GM12878 (cell line): ENCODE measurements at regions of chr5 and their contacts with region 1.

Region 1: GRCh38 chr5:134041570-134042411 is 37.0 kb upstream of the VDAC1 start:
- DNase-seq: peak; percentile 74
- ATAC-seq: peak; percentile 88
- H3K4me3 ChIP-seq: no peak overlapping the region
- H3K27ac ChIP-seq: peak overlapping the region; percentile 33; the same call in 1 of the 2 replicates
- H3K4me1 ChIP-seq: peaks cover 24% of the 10 kb centered on the region
- H3K27me3 ChIP-seq: no peaks in the 10 kb centered on the region
- CTCF ChIP-seq: no peak
- EP300 ChIP-seq: peak; percentile 73 to 90
- POLR2A ChIP-seq: no peak
- RAD21 ChIP-seq: 0 out of 2 replicates have a peak, but pooled peaks have one; percentile 6

Region 2: DNA sequence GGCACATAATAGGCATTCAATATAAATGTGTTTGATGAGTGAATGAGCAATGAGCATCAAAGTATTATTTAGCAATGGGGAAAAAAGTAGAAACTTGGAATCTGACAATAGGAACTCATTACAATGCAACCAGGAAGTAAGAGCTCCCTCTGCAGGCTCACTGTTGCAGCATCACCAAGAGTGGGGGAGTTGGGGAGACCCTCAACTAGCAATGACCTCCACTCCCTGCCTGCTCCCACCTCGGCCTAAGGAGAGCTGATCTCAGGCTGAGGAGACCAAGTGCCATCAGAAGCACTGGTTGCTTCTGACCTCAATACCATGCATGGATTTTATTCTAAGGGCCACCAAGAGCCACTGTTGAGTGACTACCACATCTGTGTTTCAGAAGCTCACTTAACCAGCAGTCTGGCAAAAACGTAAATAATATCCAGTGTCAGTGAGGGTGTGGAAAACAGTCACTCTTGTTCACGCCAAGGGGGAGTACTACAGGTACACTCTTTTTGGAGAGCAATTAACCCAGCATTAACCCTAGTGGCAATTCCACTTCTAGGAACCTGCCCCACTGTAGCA is 45.0 kb before region 1 on chr5:
- CTCF ChIA-PET with region 1: interaction called, 13 read pairs
- POLR2A ChIA-PET with region 1: interaction called, 4 read pairs
- RAD21 ChIA-PET with region 1: interaction called, 3 read pairs
- SMC1A ChIA-PET with region 1: interaction called, 4 read pairs
- in situ Hi-C with region 1: no loop called
- intact Hi-C with region 1: no loop called
- DNase-seq: no peak
- ATAC-seq: peak; percentile 53
- H3K4me3 ChIP-seq: peak overlapping the region; percentile 38; the same call in 1 of the 2 replicates
- H3K27ac ChIP-seq: no peak overlapping the region
- H3K4me1 ChIP-seq: peaks cover 25% of the 10 kb centered on the region
- H3K27me3 ChIP-seq: no peaks in the 10 kb centered on the region
- CTCF ChIP-seq: peak; percentile 67 to 72 (median 68)
- EP300 ChIP-seq: no peak
- POLR2A ChIP-seq: no peak
- RAD21 ChIP-seq: peak; percentile 33

Region 3: DNA sequence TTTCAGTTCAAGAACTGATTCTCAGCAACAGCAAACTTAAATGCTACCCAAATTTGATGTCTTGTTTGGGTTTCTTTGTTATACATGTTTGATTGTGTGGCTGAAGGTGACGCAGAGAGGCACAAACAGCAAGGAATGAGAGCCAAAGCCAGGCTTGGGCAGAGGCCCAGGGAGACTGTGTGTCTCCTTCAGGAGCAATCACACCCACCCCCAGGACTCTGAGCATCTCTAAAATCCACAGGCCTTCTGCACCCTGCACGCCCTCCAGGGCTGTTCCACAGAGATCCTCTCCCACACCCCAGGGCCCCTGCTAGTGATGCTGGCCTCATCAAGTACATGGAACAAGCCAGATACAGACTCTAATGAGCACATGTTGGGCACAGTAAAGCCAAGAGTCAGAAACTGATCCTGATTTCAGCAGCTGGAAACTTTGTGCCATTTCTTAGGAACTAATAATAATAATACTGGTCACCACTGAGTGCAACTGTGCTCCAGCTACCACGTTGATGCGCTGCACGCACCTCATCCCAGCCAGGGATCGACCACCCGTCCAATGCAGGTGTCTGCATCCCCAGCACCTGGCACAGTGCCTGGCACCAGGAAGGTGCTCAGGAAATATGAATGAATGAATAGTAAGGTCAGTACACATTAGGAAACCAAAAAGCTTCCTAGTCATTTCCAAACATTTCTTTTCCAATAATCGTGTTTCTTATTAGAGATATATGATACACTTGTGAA is 18.1 kb after region 1 on chr5:
- CTCF ChIA-PET with region 1: interaction called, 70 read pairs
- POLR2A ChIA-PET with region 1: interaction called, 4 read pairs
- RAD21 ChIA-PET with region 1: interaction called, 4 read pairs
- SMC1A ChIA-PET with region 1: interaction called, 79 read pairs
- in situ Hi-C with region 1: no loop called
- intact Hi-C with region 1: no loop called
- DNase-seq: no peak
- ATAC-seq: peak; percentile 15; the same call in 1 of the 3 replicates
- H3K4me3 ChIP-seq: no peak overlapping the region
- H3K27ac ChIP-seq: no peak overlapping the region
- H3K4me1 ChIP-seq: no peaks in the 10 kb centered on the region
- H3K27me3 ChIP-seq: no peaks in the 10 kb centered on the region
- CTCF ChIP-seq: no peak
- EP300 ChIP-seq: no peak
- POLR2A ChIP-seq: no peak
- RAD21 ChIP-seq: no peak

Region 4: GRCh38 chr5:134106991-134107701 is 65.4 kb after region 1 on chr5:
- CTCF ChIA-PET with region 1: interaction called, 30 read pairs
- POLR2A ChIA-PET with region 1: interaction called, 37 read pairs
- RAD21 ChIA-PET with region 1: interaction called, 27 read pairs
- SMC1A ChIA-PET with region 1: interaction called, 177 read pairs
- in situ Hi-C with region 1: no loop called
- intact Hi-C with region 1: no loop called
- DNase-seq: no peak
- ATAC-seq: no peak
- H3K4me3 ChIP-seq: no peak overlapping the region
- H3K27ac ChIP-seq: no peak overlapping the region
- H3K4me1 ChIP-seq: peaks cover 58% of the 10 kb centered on the region
- H3K27me3 ChIP-seq: no peaks in the 10 kb centered on the region
- CTCF ChIP-seq: no peak
- EP300 ChIP-seq: no peak
- POLR2A ChIP-seq: no peak
- RAD21 ChIP-seq: no peak

Region 5: DNA sequence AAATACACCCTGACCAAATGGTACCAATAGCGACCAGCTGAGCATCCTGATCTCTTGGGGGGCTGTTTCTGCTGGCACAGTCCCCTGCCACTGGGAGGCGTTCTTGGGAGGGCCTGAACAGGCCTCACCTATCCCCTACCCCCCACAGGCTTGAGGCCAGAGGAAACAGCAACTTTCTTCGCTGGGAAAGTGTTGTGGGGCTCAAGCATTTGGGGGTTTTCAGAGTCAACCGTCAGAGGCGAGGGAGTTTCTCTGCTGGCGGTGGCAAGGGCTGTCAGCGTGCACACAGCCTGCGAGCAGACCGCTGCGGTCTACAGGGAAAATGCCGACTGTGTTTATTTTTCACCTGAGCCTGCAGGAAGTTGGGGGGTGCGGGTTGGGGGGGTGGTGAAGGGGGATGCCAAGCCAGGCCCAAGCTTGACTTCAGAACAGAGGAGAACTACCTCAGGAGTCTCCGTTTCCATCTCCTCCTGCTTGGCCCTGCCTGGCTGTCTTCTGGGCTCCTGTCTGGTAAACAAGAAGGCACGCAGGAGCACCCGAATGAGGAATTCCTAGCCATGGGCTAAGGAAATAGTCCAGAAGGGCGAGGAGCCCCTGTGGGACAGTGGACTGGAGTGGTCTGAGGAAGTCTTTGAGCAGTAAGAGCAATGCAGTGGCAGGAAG is 90.7 kb after region 1 on chr5:
- CTCF ChIA-PET with region 1: interaction called, 792 read pairs
- POLR2A ChIA-PET with region 1: interaction called, 18 read pairs
- RAD21 ChIA-PET with region 1: interaction called, 200 read pairs
- SMC1A ChIA-PET with region 1: interaction called, 441 read pairs
- in situ Hi-C with region 1: loop called (anchors 5 kb)
- intact Hi-C with region 1: no loop called
- DNase-seq: peak; percentile 92
- ATAC-seq: peak; percentile 85
- H3K4me3 ChIP-seq: peak overlapping the region; percentile 49; the same call in 1 of the 2 replicates
- H3K27ac ChIP-seq: peak overlapping the region; percentile 98
- H3K4me1 ChIP-seq: peaks cover 71% of the 10 kb centered on the region
- H3K27me3 ChIP-seq: no peaks in the 10 kb centered on the region
- CTCF ChIP-seq: peak; percentile 65 to 80 (median 75)
- EP300 ChIP-seq: peak; percentile 96 to 98
- POLR2A ChIP-seq: peak; percentile 47
- RAD21 ChIP-seq: peak; percentile 76

Region 6: GRCh38 chr5:134153657-134154056 is 111.9 kb after region 1 on chr5:
- CTCF ChIA-PET with region 1: interaction called, 792 read pairs
- POLR2A ChIA-PET with region 1: no interaction called
- RAD21 ChIA-PET with region 1: interaction called, 63 read pairs
- SMC1A ChIA-PET with region 1: interaction called, 441 read pairs
- in situ Hi-C with region 1: no loop called
- intact Hi-C with region 1: no loop called
- DNase-seq: no peak
- ATAC-seq: no peak
- H3K4me3 ChIP-seq: no peak overlapping the region
- H3K27ac ChIP-seq: no peak overlapping the region
- H3K4me1 ChIP-seq: no peaks in the 10 kb centered on the region
- H3K27me3 ChIP-seq: no peaks in the 10 kb centered on the region
- CTCF ChIP-seq: no peak
- EP300 ChIP-seq: no peak
- POLR2A ChIP-seq: no peak
- RAD21 ChIP-seq: no peak

Region 7: GRCh38 chr5:134289509-134290113 is 247.8 kb after region 1 on chr5:
- CTCF ChIA-PET with region 1: interaction called, 11 read pairs
- POLR2A ChIA-PET with region 1: no interaction called
- RAD21 ChIA-PET with region 1: interaction called, 14 read pairs
- SMC1A ChIA-PET with region 1: interaction called, 19 read pairs
- in situ Hi-C with region 1: no loop called
- intact Hi-C with region 1: loop called (anchors 1 kb)
- DNase-seq: peak; percentile 24
- ATAC-seq: peak; percentile 96
- H3K4me3 ChIP-seq: no peak overlapping the region
- H3K27ac ChIP-seq: no peak overlapping the region
- H3K4me1 ChIP-seq: no peaks in the 10 kb centered on the region
- H3K27me3 ChIP-seq: no peaks in the 10 kb centered on the region
- CTCF ChIP-seq: peak; percentile 61 to 84 (median 63)
- EP300 ChIP-seq: no peak
- POLR2A ChIP-seq: no peak
- RAD21 ChIP-seq: peak; percentile 94